ENCODE measurements at regions of chr9 and their contacts with region 1.

Region 1: DNA sequence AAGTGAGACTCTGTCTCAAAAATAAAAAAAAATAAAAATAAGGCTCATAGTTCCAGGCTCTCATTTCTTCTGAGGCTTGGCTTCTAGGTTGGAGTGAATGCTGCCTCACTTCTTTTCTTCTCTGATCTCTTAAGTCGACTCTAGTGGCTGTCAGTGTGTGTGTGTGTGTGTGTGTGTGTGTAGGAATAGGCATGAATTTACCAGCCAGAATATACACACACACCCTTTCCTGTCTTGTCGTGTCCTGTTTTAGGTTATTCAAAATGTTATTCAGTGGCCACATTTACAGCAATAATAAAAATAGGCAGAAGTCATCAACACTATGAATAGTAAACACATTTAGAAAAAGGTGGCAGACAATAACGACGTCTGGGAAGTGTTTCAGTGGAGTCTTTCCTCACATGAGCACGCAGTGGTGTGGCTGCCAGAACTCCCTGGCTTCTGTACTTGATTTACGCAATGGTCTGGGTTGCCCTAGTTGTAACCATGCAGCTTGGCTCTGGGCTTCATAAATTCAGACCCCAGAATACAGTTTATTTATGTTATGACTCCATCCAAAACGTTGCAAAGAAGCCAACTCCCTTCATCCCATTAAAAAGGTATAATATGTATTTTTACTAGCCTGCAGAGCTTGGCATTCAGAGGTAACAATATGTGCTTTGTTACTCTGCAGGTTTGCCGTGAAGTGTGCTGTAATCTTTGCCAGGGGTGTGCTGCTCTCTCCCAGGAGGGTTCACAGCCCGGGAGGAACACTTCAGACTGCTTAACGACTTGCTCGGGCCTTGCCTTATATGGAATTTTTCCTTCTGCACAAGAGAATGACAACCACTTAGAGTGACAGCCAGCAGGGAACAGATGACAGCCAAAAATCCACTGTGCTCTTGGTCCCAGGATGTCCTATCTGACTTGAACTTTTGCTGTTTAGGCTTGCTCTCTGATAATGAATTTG is 34.4 kb upstream of the PALM2AKAP2 start:
- DNase-seq: peak; percentile 44 to 88
- H3K4me3 ChIP-seq: peak overlapping the region in 1 of 2 donors; percentile 24
- H3K27ac ChIP-seq: peak overlapping the region; percentile 76 to 86
- H3K4me1 ChIP-seq: peaks cover 15 to 31% of the 10 kb centered on the region in 2 donors
- H3K27me3 ChIP-seq: no peaks in the 10 kb centered on the region
- CTCF ChIP-seq: no peak

Region 2: GRCh38 chr9:109604788-109605187 is 140.8 kb before region 1 on chr9:
- intact Hi-C with region 1: no loop called
- DNase-seq: no peak
- H3K4me3 ChIP-seq: no peak overlapping the region
- H3K27ac ChIP-seq: no peak overlapping the region
- H3K4me1 ChIP-seq: no peaks in the 10 kb centered on the region
- H3K27me3 ChIP-seq: no peaks in the 10 kb centered on the region
- CTCF ChIP-seq: no peak

Region 3: DNA sequence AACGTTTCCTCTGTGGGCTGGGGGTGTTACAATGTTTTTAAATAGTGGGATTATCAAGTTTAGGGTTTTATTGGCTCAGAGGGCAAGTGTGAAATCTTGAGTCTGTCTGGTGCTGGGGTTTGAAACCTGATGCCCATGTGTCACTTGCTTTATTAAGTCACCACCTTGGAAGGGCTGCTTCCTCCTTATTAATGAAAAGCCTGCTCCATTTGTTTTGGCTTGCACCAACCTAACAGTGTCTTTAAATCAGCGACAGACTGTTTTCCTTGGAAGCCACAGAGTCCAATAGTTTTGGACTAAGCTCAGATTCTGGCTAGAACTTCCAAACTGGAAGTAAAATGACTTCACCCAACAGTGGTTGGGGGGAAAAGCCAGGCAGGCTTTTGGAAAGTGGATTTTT is 23.6 kb after region 1 on chr9:
- intact Hi-C with region 1: loop called (anchors 2 kb)
- DNase-seq: peak in 1 of 2 donors; percentile 71
- H3K4me3 ChIP-seq: no peak overlapping the region
- H3K27ac ChIP-seq: peak overlapping the region; percentile 18 to 35
- H3K4me1 ChIP-seq: peaks cover 14 to 27% of the 10 kb centered on the region in 2 donors
- H3K27me3 ChIP-seq: no peaks in the 10 kb centered on the region
- CTCF ChIP-seq: no peak

Region 4: GRCh38 chr9:110389148-110389750 is 643.6 kb after region 1 on chr9:
- intact Hi-C with region 1: no loop called
- DNase-seq: no peak
- H3K4me3 ChIP-seq: no peak overlapping the region
- H3K27ac ChIP-seq: no peak overlapping the region
- H3K4me1 ChIP-seq: no peaks in the 10 kb centered on the region
- H3K27me3 ChIP-seq: no peaks in the 10 kb centered on the region
- CTCF ChIP-seq: no peak